Posterior vena cava (tissue), 2 donors: ENCODE measurements at regions of chr22 and their contacts with region 1.

Region 1: GRCh38 chr22:19455585-19456370 is 8.3 kb upstream of the C22orf39 start:
- DNase-seq: no peak

Region 2: DNA sequence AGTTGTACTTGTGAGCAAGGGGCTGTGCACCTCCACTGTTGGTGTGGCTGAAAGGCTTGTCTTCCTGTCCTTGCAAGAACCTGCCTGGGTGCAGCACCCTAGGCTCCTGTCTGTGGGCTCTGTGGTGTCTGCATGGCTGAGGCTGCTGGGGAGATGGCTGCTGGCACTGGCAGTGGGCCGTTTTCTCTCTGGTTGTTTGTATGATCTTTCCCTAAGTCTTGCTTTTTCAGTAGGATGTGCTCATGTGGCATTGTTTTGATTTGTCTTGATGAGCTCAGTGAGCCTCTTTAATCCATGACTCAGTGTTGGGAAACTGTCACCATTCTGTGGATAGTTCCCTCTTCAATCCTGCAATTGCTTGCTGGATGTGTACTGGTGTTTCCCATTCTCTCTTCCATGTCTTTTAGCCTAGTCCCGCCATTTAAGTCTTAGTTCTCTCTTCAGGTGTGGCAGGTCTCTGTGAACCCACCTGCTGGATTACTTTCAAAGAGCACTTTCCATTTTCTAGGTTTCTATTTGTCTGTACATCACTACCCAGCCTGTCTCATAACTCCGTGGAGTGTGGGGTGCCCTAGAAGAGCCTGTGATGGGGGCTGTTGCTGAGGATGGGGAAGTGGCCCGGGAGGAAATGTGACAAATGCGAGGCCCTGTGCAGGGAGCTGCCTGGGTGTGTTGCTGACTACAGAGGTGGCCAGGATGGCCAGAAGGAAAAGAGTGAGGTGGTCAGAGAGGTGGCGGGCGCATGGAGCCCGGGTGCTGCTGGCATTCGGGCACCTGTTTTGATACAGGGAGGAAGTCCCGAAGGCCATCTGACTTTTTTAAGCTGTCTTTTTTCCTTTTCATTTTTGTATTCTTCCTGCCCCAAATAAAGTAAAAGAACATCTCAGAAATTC is 634.8 kb after region 1 on chr22:
- intact Hi-C with region 1: loop called in 1 of 2 experiments (anchors 5 kb)
- DNase-seq: no peak

Region 3: GRCh38 chr22:20550821-20551744 is 1095.3 kb after region 1 on chr22:
- intact Hi-C with region 1: loop called in 1 of 2 experiments (anchors 10 kb)
- DNase-seq: peak; percentile 88